HEK293 (cell line): ENCODE measurements at regions of chr6 and their contacts with region 1.

Region 1: GRCh38 chr6:37102279-37103168 is 67.4 kb upstream of the PIM1 start:
- H3K4me3 ChIP-seq: peak overlapping the region; percentile 23
- H3K27ac ChIP-seq: peak overlapping the region; percentile 79
- H3K4me1 ChIP-seq: peaks cover 26% of the 10 kb centered on the region
- CTCF ChIP-seq: no peak

Region 2: DNA sequence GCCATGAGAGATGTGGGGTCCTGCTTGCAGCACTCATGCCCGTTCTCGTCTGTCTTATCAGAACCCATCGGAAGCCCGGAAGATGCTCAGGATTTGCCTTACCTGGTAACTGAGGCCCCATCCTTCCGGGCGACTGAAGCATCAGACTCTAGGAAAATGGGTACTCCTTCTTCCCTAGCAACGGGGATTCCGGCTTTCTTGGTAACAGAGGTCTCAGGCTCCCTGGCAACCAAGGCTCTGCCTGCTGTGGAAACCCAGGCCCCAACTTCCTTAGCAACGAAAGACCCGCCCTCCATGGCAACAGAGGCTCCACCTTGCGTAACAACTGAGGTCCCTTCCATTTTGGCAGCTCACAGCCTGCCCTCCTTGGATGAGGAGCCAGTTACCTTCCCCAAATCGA is 139.7 kb before region 1 on chr6:
- CTCF ChIA-PET with region 1: no interaction called
- POLR2A ChIA-PET with region 1: no interaction called
- H3K4me3 ChIP-seq: no peak overlapping the region
- H3K27ac ChIP-seq: no peak overlapping the region
- H3K4me1 ChIP-seq: no peaks in the 10 kb centered on the region
- CTCF ChIP-seq: no peak

Region 3: DNA sequence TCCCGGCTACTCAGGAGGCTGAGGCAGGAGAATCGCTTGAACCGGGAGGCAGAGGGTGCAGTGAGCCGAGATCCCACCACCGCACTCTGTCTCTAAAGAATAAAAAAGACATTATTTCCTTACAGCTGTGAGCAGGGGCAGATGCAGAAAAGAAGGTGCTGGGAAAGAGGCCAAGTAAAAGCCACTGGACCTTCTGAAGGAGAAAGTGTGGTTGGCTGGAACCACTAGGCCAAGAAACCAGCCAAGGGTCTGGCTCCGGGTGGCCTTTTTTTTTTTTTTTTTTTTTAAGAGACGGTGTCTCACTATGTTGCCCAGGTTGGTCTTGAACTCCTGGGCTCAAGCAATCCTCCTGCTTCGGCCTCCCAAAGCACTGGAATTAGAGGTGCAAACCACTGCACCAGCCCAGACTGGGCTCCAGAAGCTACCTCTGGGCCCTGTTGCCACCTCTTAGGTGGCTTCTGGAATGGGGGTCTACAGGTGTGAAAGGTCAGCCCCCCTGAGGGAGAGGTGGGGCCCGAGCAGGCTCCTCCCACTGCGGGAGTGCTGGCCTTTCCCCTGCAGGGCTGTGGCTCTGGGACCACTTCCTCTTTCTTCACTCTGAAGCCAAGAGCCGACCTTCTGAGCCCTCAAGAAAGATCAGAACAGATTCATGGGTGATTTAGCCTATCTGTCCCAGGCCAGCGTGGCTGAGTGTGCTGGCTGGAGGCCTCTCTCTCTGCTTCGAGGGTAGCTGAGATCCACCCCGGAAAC is 97.3 kb before region 1 on chr6 and contains the start of gene FGD2:
- CTCF ChIA-PET with region 1: no interaction called
- POLR2A ChIA-PET with region 1: no interaction called
- H3K4me3 ChIP-seq: no peak within 1 kb of the TSS
- H3K27ac ChIP-seq: no peak within 1 kb of the TSS
- H3K4me1 ChIP-seq: no peaks in the 10 kb centered on the region
- CTCF ChIP-seq: no peak

Region 4: DNA sequence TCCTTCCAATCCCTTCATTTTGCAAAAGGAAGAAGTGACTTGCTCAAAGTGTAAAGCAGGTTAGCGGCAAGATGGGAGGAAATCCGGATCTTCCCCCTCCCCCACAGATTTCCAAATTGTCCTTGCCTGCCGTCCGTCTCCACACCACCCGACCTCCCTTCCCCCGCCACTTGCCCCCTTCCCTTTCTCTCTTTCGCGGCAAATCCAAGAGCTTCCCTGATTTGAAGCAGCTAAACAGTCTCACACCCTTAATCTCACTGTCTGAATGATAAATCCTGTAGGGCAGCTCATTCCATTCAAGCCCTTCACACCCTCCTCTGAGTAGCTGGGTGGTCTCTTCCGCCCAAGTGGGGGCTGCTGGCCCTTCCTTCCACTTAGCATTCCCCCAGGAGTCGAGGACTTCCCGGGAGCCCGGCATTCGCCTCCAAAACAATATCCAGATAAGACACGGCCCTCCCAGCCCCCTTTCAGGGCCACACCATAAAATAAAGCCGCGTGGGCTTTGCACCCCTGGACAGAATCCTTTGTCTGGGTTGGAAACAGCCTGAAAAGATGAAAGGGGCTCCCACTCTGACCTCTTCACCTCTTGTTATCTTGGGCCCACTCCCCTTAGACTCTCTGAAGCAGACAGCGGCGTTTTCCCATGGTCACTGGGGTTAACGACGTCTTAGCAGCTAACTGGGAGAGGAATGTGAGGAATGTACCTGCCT is 23.4 kb after region 1 on chr6:
- CTCF ChIA-PET with region 1: interaction called, 6 read pairs
- POLR2A ChIA-PET with region 1: interaction called, 12 read pairs
- H3K4me3 ChIP-seq: peak overlapping the region; percentile 3; the same call in 1 of the 2 replicates
- H3K27ac ChIP-seq: peak overlapping the region; percentile 10; the same call in 1 of the 2 replicates
- H3K4me1 ChIP-seq: peaks cover 14% of the 10 kb centered on the region
- CTCF ChIP-seq: no peak

Region 5: DNA sequence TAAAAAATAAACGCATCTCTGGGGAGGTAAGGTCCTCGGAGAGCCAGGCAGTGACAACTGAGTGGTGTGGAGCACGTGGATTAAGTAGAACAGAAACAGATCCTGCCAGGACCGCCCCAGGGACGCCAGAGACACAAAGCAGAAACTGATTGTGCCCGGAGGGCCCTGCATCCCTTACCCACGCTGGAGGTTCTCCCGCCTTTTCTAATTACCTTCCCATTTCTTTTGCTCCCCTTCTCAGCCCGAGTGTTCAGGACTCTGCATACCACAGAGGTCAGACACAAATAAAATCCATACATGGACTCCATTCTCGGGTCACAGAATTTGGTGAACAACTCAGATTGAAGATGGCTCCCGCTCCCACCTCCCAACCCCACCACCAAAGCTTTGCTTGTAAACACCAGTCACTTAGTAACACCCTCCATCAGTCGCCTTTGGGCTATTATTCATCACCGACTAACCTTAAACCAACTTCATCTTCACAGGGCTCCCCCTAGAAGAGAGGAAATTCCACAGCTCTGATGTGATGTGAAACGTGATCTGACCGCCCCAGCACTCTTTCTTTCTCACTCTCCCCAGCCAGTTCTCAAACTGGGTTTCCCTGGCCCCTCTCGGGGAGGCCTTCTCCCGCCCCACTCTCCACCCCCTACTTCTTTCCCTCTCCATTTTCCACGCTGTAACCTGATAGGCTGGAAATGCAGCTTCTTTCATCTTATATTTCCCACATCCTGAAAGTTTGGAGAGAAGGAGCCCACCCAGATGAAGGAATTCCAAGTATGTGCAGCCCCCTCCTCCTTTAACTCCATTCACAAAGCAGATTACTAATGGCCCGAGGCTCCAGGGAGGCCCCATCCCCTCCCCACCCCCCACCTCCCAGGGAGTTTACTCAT is 34.9 kb after region 1 on chr6:
- CTCF ChIA-PET with region 1: interaction called, 4 read pairs
- POLR2A ChIA-PET with region 1: interaction called, 13 read pairs
- H3K4me3 ChIP-seq: peak overlapping the region; percentile 19
- H3K27ac ChIP-seq: peak overlapping the region; percentile 73
- H3K4me1 ChIP-seq: peaks cover 27% of the 10 kb centered on the region
- CTCF ChIP-seq: no peak